CD8-positive, alpha-beta T cell (primary cell): ENCODE measurements at regions of chr12 and their contacts with region 1.

Region 1: DNA sequence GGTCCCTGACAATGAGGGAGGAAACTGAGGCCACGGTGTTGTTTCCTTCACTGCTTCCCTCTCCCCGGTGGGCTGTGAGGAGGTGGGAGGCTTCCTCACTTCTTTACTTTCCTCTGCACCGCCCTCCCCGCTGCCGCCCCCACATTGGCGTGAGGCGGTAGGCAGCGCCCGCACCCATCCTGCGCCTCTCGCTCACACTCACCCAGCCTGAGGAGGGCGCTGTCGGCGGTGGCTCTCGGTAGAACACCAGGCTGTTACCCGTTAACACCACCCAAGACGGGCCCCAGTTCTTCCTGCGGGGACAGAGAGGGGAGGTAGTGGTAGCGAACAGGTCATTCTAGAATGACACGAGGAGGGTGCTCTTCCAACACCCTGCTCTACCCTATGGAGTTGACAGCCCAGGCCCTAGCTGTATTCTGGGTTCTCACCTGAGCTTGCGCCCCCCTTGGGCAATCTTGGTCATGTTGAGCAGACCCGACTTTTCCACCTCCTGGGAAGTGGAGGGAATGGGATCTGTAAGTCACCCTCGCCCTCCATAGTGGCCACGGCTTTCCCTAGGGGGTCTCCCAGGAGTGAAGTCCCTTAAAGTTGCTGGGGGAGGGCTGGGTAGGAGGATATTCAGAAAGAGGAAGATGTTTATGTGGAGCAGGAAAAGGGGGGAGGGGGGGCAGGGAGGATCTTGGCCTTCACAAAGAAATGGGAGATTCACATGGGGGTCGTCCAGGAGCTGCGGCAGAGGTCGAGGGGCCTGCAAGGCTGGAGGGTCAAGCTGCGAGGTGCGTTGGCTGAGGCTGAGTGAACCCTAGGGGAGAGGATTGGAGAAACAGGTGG is 3.3 kb downstream of the ARHGAP9 start:
- DNase-seq: peak; percentile 50 to 83 (median 81)
- ATAC-seq: peak; percentile 22
- H3K4me3 ChIP-seq: peak overlapping the region; percentile 70 to 83
- H3K4me3 Mint-ChIP-seq: peak overlapping the region; percentile 99
- H3K27ac ChIP-seq: peak overlapping the region; percentile 95 to 98
- H3K27ac Mint-ChIP-seq: peak overlapping the region; percentile 98
- H3K4me1 ChIP-seq: peaks cover 77% of the 10 kb centered on the region
- H3K4me1 Mint-ChIP-seq: peaks cover 84% of the 10 kb centered on the region
- H3K27me3 ChIP-seq: no peaks in the 10 kb centered on the region
- H3K27me3 Mint-ChIP-seq: no peaks in the 10 kb centered on the region
- CTCF ChIP-seq: peak; percentile 67

Region 2: GRCh38 chr12:57430931-57431720 is 45.3 kb before region 1 on chr12 and contains the start of gene R3HDM2:
- CTCF ChIA-PET with region 1: no interaction called
- POLR2A ChIA-PET with region 1: interaction called, 3 read pairs
- intact Hi-C with region 1: loop called in 1 of 2 experiments (anchors 2 kb)
- DNase-seq: peak; percentile 91 to 98 (median 96)
- ATAC-seq: peak; percentile 91
- H3K4me3 ChIP-seq: peak within 1 kb of the TSS; percentile 51 to 59
- H3K4me3 Mint-ChIP-seq: peak within 1 kb of the TSS; percentile 98
- H3K27ac ChIP-seq: peak within 1 kb of the TSS; percentile 87 to 96
- H3K27ac Mint-ChIP-seq: peak within 1 kb of the TSS; percentile 100
- H3K4me1 ChIP-seq: peaks cover 26% of the 10 kb centered on the region
- H3K4me1 Mint-ChIP-seq: peaks cover 45% of the 10 kb centered on the region
- H3K27me3 ChIP-seq: no peaks in the 10 kb centered on the region
- H3K27me3 Mint-ChIP-seq: no peaks in the 10 kb centered on the region
- CTCF ChIP-seq: no peak
- total RNA-seq, gene R3HDM2: 93.2 to 103 TPM

Region 3: DNA sequence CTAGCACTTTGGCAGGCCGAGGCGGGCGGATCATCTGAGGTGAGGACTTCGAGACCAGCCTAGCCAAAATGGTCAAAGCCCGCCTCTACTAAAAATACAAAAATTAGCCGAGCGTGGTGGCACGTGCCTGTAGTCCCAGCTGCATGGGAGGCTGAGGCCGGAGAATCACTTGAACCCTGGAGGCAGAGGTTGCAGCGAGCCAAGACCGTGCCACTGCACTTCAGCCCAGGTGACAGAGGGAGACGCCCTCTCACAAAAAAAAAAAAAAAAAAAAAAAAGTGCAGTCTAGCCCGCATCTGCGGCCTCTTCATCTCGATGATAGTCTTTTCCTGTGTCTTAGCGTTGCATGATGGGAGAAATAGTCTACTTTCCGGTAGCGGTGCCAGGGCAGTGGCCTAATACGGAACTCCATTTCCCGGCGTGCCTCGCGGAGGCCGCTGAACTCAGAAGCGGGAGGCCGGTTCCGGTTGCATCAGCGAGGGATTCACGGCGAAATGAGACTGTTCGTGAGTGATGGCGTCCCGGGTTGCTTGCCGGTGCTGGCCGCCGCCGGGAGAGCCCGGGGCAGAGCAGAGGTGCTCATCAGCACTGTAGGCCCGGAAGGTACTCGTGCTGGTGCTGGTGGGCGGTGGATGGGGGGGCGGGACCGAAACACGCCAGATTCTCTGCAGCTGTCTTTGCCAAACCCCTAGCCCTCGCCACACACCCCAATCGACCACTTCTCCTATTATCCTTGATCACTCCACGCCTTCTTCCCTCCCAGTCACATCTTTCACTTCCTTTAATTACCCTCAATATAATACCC is 11.4 kb after region 1 on chr12 and contains the start of gene MARS1:
- CTCF ChIA-PET with region 1: interaction called, 6 read pairs
- POLR2A ChIA-PET with region 1: interaction called, 9 read pairs
- intact Hi-C with region 1: loop called (anchors 1 kb)
- DNase-seq: peak; percentile 78 to 98 (median 92)
- ATAC-seq: peak; percentile 94
- H3K4me3 ChIP-seq: peak within 1 kb of the TSS; percentile 66 to 85
- H3K4me3 Mint-ChIP-seq: peak within 1 kb of the TSS; percentile 93
- H3K27ac ChIP-seq: peak within 1 kb of the TSS; percentile 61 to 85
- H3K27ac Mint-ChIP-seq: peak within 1 kb of the TSS; percentile 94
- H3K4me1 ChIP-seq: peaks cover 19% of the 10 kb centered on the region
- H3K4me1 Mint-ChIP-seq: peaks cover 36% of the 10 kb centered on the region
- H3K27me3 ChIP-seq: no peaks in the 10 kb centered on the region
- H3K27me3 Mint-ChIP-seq: no peaks in the 10 kb centered on the region
- CTCF ChIP-seq: no peak
- total RNA-seq, gene MARS1: 213 to 226 TPM

Region 4: GRCh38 chr12:57546438-57547383 is 70.3 kb after region 1 on chr12 and contains the start of gene DCTN2:
- CTCF ChIA-PET with region 1: interaction called, 3 read pairs
- POLR2A ChIA-PET with region 1: no interaction called
- intact Hi-C with region 1: loop called in 1 of 2 experiments (anchors 1 kb)
- DNase-seq: peak; percentile 79 to 97 (median 89)
- ATAC-seq: peak; percentile 94
- H3K4me3 ChIP-seq: peak within 1 kb of the TSS; percentile 63 to 94
- H3K4me3 Mint-ChIP-seq: peak within 1 kb of the TSS; percentile 92
- H3K27ac ChIP-seq: peak within 1 kb of the TSS; percentile 63 to 87
- H3K27ac Mint-ChIP-seq: peak within 1 kb of the TSS; percentile 91
- H3K4me1 ChIP-seq: peaks cover 27% of the 10 kb centered on the region
- H3K4me1 Mint-ChIP-seq: peaks cover 57% of the 10 kb centered on the region
- H3K27me3 ChIP-seq: no peaks in the 10 kb centered on the region
- H3K27me3 Mint-ChIP-seq: no peaks in the 10 kb centered on the region
- CTCF ChIP-seq: no peak
- total RNA-seq, gene DCTN2: 39.2 to 43.3 TPM

Region 5: GRCh38 chr12:57621497-57622292 is 145.3 kb after region 1 on chr12:
- CTCF ChIA-PET with region 1: interaction called, 3 read pairs
- POLR2A ChIA-PET with region 1: no interaction called
- intact Hi-C with region 1: loop called in 1 of 2 experiments (anchors 5 kb)
- DNase-seq: peak in 8 of 9 experiments; percentile 41 to 80 (median 64)
- ATAC-seq: peak; percentile 66
- H3K4me3 ChIP-seq: peak overlapping the region; percentile 45 to 52
- H3K4me3 Mint-ChIP-seq: peak overlapping the region; percentile 82
- H3K27ac ChIP-seq: no peak overlapping the region
- H3K27ac Mint-ChIP-seq: no peak overlapping the region
- H3K4me1 ChIP-seq: peaks cover 30% of the 10 kb centered on the region
- H3K4me1 Mint-ChIP-seq: peaks cover 26% of the 10 kb centered on the region
- H3K27me3 ChIP-seq: peaks cover 71 to 75% of the 10 kb centered on the region in 2 experiments
- H3K27me3 Mint-ChIP-seq: peaks cover 93% of the 10 kb centered on the region
- CTCF ChIP-seq: peak; percentile 83

Region 6: GRCh38 chr12:59030398-59030797 is 1554.0 kb after region 1 on chr12:
- CTCF ChIA-PET with region 1: no interaction called
- POLR2A ChIA-PET with region 1: no interaction called
- intact Hi-C with region 1: no loop called
- DNase-seq: no peak
- ATAC-seq: no peak
- H3K4me3 ChIP-seq: no peak overlapping the region
- H3K4me3 Mint-ChIP-seq: no peak overlapping the region
- H3K27ac ChIP-seq: no peak overlapping the region
- H3K27ac Mint-ChIP-seq: no peak overlapping the region
- H3K4me1 ChIP-seq: no peaks in the 10 kb centered on the region
- H3K4me1 Mint-ChIP-seq: no peaks in the 10 kb centered on the region
- H3K27me3 ChIP-seq: no peaks in the 10 kb centered on the region
- H3K27me3 Mint-ChIP-seq: no peaks in the 10 kb centered on the region
- CTCF ChIP-seq: no peak